SK-N-SH (cell line): ENCODE measurements at regions of chr6 and their contacts with region 1.

Region 1: DNA sequence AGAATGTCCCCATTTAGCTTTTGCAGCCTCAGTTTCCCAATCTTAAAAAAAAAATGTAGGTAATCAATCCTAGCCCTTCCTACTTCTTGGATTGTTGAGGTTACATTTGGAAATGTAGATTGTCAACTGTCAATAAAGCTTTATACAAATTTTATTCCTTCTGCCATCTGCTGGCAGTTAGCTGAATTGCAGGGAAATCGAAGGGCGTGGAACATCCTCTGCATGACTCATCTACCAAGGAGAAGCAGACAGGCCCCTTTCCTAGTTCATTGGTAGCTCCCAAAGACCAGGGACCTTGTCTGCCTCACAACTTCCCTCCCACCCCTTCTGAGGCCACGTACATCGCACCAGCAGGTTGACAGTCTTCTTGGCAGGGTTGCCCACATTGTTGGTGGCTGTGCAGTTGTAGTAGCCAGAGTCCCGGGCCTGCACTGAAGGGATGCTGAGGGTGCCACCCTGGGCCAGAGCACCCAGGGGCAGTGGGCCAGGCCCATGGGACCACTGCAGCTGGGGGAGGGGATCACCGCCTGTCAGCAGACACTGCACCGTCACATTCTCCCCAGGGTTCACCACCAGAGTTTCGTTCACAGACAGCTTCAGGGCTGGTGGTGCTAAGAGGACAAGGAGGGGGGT is 43.6 kb downstream of the MDGA1 start:
- DNase-seq: peak; percentile 64
- H3K4me3 ChIP-seq: no peak overlapping the region
- H3K27ac ChIP-seq: no peak overlapping the region
- H3K4me1 ChIP-seq: peaks cover 0 to 4% of the 10 kb centered on the region in 2 experiments; a peak in 1 of 4 replicates
- H3K27me3 ChIP-seq: no peaks in the 10 kb centered on the region
- CTCF ChIP-seq: peak; percentile 71
- EP300 ChIP-seq: no peak
- RAD21 ChIP-seq: peak; percentile 36; the same call in 1 of the 2 replicates

Region 2: DNA sequence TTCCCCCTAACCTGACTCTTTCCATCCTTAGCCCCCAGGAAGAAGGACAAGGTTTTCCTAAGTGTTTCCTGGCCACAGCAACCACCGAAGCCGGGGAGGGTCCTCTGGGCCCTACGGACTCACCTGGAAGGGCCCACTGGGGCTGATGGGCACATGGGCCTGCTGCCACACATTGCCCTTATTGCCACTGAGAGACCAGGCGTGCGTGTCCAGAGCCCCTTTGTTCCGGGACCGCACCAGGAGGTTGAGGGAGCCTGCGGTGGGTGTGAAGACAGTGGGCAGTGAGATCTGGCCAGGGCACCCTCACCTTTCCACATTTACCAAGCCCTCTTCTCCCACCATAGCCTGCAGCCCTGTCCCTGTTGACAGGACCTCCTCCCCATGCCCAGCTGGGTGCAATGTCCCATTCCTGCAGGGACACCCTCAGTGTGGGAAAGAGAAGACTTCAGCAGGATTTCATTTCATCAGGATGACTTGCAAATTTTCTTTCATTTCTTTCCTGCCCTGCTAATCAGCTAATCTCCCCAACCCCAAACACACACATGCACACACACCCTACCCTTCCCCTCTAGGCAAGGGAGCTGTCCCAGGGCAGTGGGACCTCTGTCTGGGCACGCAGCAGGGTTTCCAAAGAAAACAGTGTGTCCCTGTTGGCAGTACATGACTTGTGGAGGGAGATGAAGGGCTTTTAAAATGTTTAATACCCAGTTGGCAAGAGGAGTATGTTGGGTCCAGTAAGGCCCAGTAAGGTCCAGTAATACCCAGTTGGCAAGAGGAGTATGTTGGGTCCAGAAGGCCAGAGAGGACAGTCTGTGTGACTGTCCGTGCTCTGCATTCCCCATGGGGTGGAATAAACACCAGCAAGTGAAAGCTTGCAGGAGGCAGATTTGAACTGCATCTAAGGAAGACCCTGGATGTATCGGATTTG is 15.4 kb before region 1 on chr6:
- CTCF ChIA-PET with region 1: interaction called, 13 read pairs
- POLR2A ChIA-PET with region 1: no interaction called
- DNase-seq: no peak
- H3K4me3 ChIP-seq: no peak overlapping the region
- H3K27ac ChIP-seq: no peak overlapping the region
- H3K4me1 ChIP-seq: peaks cover 0 to 21% of the 10 kb centered on the region in 2 experiments; a peak in 2 of 4 replicates
- H3K27me3 ChIP-seq: no peaks in the 10 kb centered on the region
- CTCF ChIP-seq: no peak
- EP300 ChIP-seq: no peak
- RAD21 ChIP-seq: no peak